MCF 10A (cell line): ENCODE measurements at regions of chr5 and their contacts with region 1.

Region 1: GRCh38 chr5:63401436-63402046 is 560.7 kb downstream of the HTR1A start:
- DNase-seq: peak; percentile 77
- H3K4me3 Mint-ChIP-seq: no peak overlapping the region
- H3K27ac Mint-ChIP-seq: no peak overlapping the region
- H3K4me1 Mint-ChIP-seq: no peaks in the 10 kb centered on the region
- H3K27me3 Mint-ChIP-seq: peaks cover 12% of the 10 kb centered on the region
- CTCF ChIP-seq: peak; percentile 69

Region 2: DNA sequence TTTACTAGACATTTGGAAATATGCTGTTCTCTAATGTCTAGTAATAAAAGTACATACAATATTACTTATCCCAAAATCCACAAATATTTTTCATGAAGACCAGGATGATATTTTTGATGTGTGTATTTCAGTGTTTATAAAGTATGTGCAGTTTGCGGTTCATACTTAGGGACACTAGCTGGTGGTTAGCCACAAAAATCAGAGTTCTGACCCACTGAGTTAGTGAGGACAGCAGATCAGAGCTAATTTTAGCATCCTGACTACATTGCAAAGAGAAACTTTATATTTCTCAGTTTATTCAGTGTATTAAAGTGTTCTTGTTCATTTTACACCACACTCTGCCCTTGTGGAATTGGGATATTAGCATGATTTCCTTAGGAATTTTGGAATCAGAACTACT is 94.6 kb before region 1 on chr5:
- CTCF ChIA-PET with region 1: no interaction called
- POLR2A ChIA-PET with region 1: no interaction called
- intact Hi-C with region 1: no loop called
- DNase-seq: no peak
- H3K4me3 Mint-ChIP-seq: no peak overlapping the region
- H3K27ac Mint-ChIP-seq: no peak overlapping the region
- H3K4me1 Mint-ChIP-seq: no peaks in the 10 kb centered on the region
- H3K27me3 Mint-ChIP-seq: no peaks in the 10 kb centered on the region
- CTCF ChIP-seq: no peak

Region 3: GRCh38 chr5:63483338-63483737 is 81.8 kb after region 1 on chr5:
- CTCF ChIA-PET with region 1: no interaction called
- POLR2A ChIA-PET with region 1: no interaction called
- intact Hi-C with region 1: no loop called
- DNase-seq: no peak
- H3K4me3 Mint-ChIP-seq: no peak overlapping the region
- H3K27ac Mint-ChIP-seq: no peak overlapping the region
- H3K4me1 Mint-ChIP-seq: no peaks in the 10 kb centered on the region
- H3K27me3 Mint-ChIP-seq: no peaks in the 10 kb centered on the region
- CTCF ChIP-seq: no peak

Region 4: DNA sequence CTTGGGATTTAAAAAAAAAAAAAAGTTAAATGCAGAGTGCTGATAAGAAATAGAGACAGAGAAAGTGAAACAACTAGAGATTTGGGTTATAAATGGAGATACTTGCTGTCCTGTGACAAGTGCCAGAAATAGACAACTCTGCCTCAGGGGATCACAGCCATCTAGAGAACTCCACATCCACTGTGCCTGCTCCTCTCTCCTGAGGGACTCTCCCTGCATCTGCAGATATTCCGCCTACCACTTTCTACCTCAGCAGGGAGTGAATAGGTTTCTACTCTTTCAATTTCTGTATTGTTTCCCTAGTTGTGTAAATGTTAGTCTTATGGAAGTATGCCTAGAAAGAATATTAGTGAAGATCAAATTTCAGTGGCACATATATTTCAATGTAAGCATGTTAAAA is 253.5 kb after region 1 on chr5:
- CTCF ChIA-PET with region 1: interaction called, 3 read pairs
- POLR2A ChIA-PET with region 1: no interaction called
- intact Hi-C with region 1: loop called (anchors 10 kb)
- DNase-seq: no peak
- H3K4me3 Mint-ChIP-seq: no peak overlapping the region
- H3K27ac Mint-ChIP-seq: no peak overlapping the region
- H3K4me1 Mint-ChIP-seq: no peaks in the 10 kb centered on the region
- H3K27me3 Mint-ChIP-seq: no peaks in the 10 kb centered on the region
- CTCF ChIP-seq: no peak

Region 5: GRCh38 chr5:63963080-63963735 is 561.7 kb after region 1 on chr5:
- CTCF ChIA-PET with region 1: interaction called, 45 read pairs
- POLR2A ChIA-PET with region 1: no interaction called
- intact Hi-C with region 1: loop called (anchors 1 kb)
- DNase-seq: peak; percentile 80
- H3K4me3 Mint-ChIP-seq: no peak overlapping the region
- H3K27ac Mint-ChIP-seq: no peak overlapping the region
- H3K4me1 Mint-ChIP-seq: peaks cover 4% of the 10 kb centered on the region
- H3K27me3 Mint-ChIP-seq: peaks cover 31% of the 10 kb centered on the region
- CTCF ChIP-seq: peak; percentile 67

Region 6: DNA sequence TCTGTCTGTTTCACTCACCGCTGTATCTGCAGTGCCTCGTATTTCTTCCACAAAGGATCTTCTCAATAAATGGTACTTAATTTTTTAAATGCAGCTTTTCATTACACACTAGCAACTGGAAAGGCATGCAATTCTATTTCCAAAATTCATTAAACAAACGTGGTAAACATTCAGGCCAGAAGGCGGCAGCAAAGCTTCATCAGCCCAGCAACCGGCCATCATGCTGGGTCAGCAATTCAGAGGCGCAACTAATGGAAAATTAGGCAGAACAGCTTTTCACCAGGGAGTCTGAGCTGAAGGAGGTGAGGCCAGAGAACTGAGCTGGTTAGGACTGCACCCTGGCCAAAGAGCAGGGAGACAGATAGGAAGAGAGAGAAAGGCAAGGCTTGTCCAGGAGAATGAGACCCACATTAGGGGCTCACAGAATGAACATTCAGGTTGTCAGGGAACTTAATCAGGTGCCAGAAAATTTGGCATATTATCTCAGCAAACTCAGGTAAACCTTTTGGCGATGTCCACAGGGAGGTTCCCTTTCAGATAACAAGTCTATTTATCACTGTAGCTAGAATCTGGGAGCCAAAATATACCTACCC is 746.4 kb after region 1 on chr5:
- CTCF ChIA-PET with region 1: interaction called, 3 read pairs
- POLR2A ChIA-PET with region 1: no interaction called
- intact Hi-C with region 1: loop called (anchors 2 kb)
- DNase-seq: peak; percentile 60
- H3K4me3 Mint-ChIP-seq: no peak overlapping the region
- H3K27ac Mint-ChIP-seq: no peak overlapping the region
- H3K4me1 Mint-ChIP-seq: peaks cover 8% of the 10 kb centered on the region
- H3K27me3 Mint-ChIP-seq: no peaks in the 10 kb centered on the region
- CTCF ChIP-seq: peak; percentile 88